Dendritic cell treated with granulocyte-macrophage colony-stimulating factor and Interleukin-4, amounts not matched to agents 40 ng/mL and 50 ng/mL, for 4 days (primary cell): ENCODE measurements at regions of chr1 and their contacts with region 1.

Region 1: DNA sequence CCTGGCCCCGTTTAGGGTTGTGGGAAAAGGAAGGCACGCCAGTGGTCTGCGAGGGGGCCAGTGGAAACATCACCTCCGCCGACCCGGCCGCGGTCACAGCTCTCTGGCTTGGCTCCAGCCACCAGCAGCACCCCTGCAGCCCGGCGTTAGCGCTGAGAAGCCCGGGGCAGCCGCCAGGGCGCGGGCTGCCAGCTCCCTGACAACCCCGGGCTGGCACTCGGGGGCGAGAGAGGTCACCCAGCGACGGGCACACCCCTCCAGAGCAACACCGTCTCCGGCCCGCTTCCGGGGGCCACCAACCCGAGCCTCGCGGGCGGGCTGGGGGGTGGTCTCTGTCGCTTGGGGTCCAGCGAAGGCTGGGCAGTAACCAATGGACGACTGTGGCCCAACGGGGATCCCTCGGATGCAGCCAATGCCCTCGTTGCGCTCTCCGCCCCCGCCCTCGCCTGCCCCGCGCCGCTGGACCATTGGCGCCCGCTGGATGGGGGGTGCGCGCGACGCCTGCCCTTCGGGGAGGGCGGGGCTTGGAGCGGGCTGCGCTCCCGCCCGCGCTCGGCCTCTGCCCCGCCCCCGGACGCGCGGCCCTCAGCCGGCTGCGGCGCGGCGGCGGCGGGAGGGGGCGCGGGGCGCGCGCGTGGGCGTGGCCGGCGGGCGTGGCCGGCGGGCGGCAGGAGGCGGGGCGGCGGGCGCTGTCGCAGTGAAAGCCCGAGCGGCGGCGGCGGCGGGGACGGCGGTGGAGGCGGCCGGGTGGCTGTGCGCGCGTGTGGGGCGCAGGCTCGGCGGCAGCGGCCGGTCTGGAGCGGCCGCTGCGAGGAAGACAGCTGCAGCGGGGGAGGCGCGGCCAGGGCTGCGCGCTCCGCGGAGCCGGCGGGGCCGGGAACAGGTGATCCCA is at the start of gene MAN1C1:
- H3K4me3 Mint-ChIP-seq: peak within 1 kb of the TSS; percentile 88
- H3K27ac Mint-ChIP-seq: peak within 1 kb of the TSS; percentile 74
- H3K4me1 Mint-ChIP-seq: peaks cover 51% of the 10 kb centered on the region
- H3K27me3 Mint-ChIP-seq: peaks cover 37% of the 10 kb centered on the region

Region 2: DNA sequence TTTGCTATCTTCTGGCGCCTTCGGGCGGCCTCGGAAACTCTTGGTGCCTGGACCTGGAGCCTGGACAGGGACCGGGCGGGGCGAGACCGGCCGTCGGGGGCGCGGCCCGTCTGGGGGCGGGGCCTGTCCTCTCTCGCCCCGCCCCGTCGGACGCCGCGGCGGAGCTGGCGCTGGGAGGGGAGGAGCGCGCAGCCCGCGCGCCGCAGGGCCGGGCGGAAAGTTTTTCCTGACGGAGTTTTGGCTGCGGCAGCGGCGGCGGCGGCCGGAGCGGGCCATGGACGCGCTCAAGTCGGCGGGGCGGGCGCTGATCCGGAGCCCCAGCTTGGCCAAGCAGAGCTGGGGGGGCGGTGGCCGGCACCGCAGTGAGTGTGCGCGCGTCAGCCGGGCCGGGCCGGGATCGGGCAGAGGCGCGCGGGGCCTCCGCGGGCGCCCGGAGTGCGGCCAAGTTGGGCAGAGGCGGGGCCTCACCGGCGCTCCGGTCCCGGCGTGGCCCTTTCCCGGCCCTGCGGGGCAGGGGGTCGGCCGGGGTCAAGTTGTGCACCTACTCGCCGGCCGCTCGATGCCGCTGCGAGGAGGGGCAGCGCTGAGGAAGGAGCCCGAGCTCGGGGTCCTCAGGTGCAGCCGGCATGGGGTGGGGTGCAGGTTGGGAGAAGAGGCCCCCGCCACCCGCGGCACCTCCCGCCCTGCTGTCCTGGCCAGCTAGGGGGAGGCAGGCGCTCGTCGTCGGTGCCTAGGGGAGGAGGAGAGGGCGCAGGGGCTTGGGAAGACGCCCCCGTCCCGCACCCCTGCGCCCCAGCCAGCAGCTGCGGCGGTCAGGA is 72.7 kb before region 1 on chr1 and contains the start of gene LDLRAP1:
- intact Hi-C with region 1: loop called (anchors 10 kb)
- H3K4me3 Mint-ChIP-seq: peak within 1 kb of the TSS; percentile 63
- H3K27ac Mint-ChIP-seq: peak within 1 kb of the TSS; percentile 71
- H3K4me1 Mint-ChIP-seq: peaks cover 30% of the 10 kb centered on the region
- H3K27me3 Mint-ChIP-seq: peaks cover 11% of the 10 kb centered on the region

Region 3: DNA sequence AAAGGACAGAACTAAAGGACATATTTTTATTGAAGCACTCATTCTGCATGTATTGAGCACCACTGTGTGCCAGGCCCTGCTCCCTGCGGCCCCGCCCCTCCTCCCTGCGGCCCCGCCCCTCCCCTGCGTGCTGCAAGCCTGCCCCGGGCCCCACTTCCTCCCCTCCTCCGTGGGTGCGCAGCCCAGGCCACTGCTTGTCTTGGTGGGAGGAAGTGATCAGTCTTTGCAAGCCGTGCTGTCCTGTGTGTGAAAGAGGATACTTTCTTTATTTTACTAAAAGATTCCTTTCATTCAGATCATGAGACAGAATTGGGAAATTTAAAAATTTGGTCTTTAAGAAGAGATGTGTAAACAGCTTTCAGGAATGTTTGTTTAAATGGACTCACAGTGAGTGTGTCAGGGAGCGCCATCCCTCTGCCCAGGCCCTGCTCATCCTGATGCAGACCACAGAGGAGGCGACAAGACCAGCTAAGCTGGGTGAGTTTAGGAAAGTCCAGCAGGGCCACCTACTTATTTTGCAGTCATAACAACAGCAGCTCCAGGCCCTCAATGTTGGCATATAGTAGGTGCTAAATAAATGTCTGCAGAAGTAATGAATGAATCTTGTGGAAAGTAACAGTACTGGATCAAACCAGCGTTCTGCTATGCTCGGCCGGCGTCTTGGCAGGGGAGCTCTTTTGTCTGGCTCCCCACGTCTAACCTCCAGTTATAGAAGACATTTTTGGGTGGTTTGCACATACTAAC is 95.4 kb after region 1 on chr1:
- intact Hi-C with region 1: loop called (anchors 10 kb)
- H3K4me3 Mint-ChIP-seq: peak overlapping the region; percentile 50
- H3K27ac Mint-ChIP-seq: peak overlapping the region; percentile 70
- H3K4me1 Mint-ChIP-seq: peaks cover 35% of the 10 kb centered on the region
- H3K27me3 Mint-ChIP-seq: no peaks in the 10 kb centered on the region

Region 4: DNA sequence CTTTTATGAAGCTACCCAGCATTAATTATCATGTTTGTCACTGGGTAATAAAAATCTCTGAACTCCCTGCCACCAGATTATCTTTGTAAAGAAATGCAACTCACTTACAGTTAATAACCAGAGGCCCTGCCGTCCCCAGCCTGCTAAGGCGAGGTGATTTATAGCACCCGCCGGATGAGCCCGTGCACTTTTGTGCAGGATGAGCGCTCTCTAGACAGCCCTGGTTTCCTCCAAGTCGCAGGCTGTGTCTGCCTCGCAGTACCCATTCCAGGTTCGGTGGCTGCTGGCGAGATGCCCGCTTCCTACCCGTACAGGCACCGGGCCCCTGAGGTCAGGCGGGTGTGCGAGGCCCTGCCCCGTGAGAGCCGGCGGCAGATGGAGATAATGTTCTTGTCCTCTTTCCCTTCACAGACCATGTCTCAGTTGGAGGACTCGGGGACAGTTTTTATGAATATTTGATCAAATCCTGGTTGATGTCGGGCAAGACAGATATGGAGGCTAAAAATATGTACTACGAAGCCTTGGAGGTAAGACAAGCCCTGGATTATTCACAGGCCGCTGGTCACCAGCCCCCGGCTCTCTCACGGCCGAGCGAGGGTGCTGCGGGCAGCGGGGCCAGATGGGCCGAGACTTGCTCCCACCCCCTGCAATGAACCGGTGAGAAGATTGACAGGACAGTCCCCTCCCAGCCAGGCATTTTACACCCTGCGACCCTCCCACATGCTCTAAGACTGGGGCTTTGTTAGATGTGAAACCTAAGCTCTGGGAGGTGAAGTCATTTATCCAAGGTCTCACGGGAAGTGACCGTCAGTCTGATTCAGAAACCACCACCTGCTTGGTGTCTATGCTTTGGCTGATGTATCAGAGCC is 155.1 kb after region 1 on chr1:
- intact Hi-C with region 1: no loop called
- H3K4me3 Mint-ChIP-seq: no peak overlapping the region
- H3K27ac Mint-ChIP-seq: no peak overlapping the region
- H3K4me1 Mint-ChIP-seq: peaks cover 15% of the 10 kb centered on the region
- H3K27me3 Mint-ChIP-seq: peaks cover 15% of the 10 kb centered on the region